Activated B cell treated with CpG ODN at 0.5 μM for 24 hours (primary cell): ENCODE measurements at regions of chr19 and their contacts with region 1.

Region 1: DNA sequence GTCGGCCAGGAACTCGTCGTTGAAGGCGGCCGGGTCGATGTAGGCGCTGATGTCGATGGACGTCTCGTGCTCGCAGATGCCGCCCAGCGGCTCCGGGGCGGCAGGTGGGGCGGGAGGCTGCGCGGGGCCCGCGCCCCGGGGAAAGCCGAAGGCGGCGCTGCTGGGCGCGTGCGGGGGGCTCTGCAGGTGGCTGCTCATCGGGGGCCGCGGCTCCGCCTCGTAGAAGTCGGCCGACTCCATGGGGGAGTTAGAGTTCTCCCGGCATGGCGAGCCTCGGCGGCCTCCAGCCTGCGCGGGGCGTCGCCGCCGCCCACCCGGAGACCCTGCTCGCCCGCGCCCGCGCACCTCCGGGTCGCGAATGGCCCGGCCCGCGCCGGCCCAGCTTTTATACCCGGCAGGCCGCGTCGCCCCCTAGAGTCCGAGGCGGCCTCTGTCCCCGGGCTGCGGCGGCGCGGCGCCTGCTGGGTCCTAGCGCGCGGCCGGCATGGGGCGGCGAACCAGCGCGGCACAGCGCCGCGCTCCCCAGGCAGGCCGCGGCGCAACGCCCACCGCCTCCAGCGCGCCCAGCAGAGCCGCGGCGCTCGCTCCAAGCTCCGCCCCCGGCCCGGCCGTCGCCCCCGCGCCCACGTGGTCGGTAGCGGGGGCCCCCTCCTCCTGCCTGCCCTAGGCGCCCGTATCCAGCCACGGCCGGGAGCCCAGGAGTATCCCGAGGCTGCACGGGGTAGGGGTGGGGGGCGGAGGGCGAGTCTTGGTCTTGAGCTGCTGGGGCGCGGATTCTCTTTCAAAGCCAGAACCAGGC is at the start of gene CEBPA:
- DNase-seq: peak; percentile 70
- ATAC-seq: peak; percentile 93
- H3K4me3 Mint-ChIP-seq: peak within 1 kb of the TSS; percentile 77
- H3K27ac Mint-ChIP-seq: no peak within 1 kb of the TSS
- H3K4me1 Mint-ChIP-seq: peaks cover 7% of the 10 kb centered on the region
- H3K27me3 Mint-ChIP-seq: peaks cover 32% of the 10 kb centered on the region
- CTCF ChIP-seq: no peak
- total RNA-seq, gene CEBPA: 0.51 and 0.83 TPM in 2 replicates

Region 2: DNA sequence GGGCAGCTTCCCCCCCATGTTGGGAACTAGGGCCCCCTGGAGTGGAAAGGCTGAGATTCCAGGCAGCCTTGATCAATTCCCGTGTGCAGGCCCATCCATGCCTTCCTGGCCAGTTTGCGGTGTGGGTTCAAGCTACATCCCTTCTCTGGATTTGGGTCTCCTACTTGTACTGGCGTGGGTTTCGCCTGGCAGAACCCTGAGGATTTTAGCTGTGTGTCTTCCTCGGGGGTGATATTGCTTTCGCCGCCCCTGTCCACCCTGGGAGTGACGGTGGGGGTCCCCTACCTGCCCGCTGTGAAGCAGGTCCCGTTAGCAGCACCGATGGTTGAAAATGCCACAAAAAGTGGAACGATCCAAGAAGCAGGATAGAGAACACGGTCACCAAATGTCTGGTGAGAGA is 444.2 kb before region 1 on chr19:
- CTCF ChIA-PET with region 1: no interaction called
- POLR2A ChIA-PET with region 1: no interaction called
- intact Hi-C with region 1: no loop called
- DNase-seq: no peak
- ATAC-seq: no peak
- H3K4me3 Mint-ChIP-seq: no peak overlapping the region
- H3K27ac Mint-ChIP-seq: no peak overlapping the region
- H3K4me1 Mint-ChIP-seq: no peaks in the 10 kb centered on the region
- H3K27me3 Mint-ChIP-seq: no peaks in the 10 kb centered on the region
- CTCF ChIP-seq: no peak

Region 3: GRCh38 chr19:33080761-33081681 is 221.4 kb before region 1 on chr19 and contains the start of gene GPATCH1:
- CTCF ChIA-PET with region 1: no interaction called
- POLR2A ChIA-PET with region 1: no interaction called
- intact Hi-C with region 1: loop called (anchors 2 kb)
- DNase-seq: peak; percentile 83
- ATAC-seq: peak; percentile 98
- H3K4me3 Mint-ChIP-seq: peak within 1 kb of the TSS; percentile 99
- H3K27ac Mint-ChIP-seq: peak within 1 kb of the TSS; percentile 93
- H3K4me1 Mint-ChIP-seq: peaks cover 23% of the 10 kb centered on the region
- H3K27me3 Mint-ChIP-seq: no peaks in the 10 kb centered on the region
- CTCF ChIP-seq: no peak
- total RNA-seq, gene GPATCH1: 12.8 and 13.0 TPM in 2 replicates

Region 4: DNA sequence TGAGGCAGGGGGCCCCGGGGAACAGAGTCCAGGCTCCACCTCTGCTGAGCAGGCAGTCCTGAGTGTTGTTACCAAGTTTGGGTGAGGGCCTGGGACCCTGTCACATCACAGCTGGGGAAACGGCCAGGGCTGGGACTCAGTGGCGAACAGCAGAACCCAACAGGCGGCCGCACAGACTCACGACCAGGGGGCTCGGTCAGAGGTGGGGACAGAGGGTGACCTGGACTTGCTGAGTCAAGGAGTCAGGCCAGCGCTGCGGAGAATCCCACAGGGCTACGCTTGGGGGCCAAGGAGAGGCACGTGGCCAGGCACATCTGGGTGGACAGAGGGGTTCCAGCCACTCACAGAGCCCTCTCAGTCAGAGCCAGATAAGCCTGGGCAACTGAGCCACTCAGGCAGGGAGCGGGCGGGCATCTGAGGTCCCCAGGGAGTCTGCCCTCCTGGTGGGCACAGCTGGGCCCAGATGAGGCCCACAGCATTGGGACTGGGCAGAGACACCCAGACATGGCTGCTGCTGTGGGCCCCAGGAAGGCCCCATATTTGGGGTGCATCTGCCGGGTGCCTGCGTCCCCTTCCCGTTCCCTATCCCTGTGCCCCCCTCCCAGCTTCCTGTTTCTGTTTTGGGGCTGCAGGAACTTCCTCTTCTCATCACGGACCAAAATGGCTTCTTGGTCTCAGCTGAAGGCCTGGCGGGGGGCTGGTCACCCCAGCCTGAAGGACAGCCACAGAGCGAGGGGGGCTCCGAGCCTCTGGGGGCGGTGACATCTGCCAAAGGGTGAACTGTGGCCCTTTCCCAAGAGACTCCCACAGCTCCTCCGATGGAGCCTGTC is 34.0 kb before region 1 on chr19:
- CTCF ChIA-PET with region 1: no interaction called
- POLR2A ChIA-PET with region 1: no interaction called
- intact Hi-C with region 1: no loop called
- DNase-seq: no peak
- ATAC-seq: no peak
- H3K4me3 Mint-ChIP-seq: no peak overlapping the region
- H3K27ac Mint-ChIP-seq: no peak overlapping the region
- H3K4me1 Mint-ChIP-seq: no peaks in the 10 kb centered on the region
- H3K27me3 Mint-ChIP-seq: peaks cover 8% of the 10 kb centered on the region
- CTCF ChIP-seq: no peak

Region 5: GRCh38 chr19:33373701-33374421 is 71.5 kb after region 1 on chr19 and contains the start of gene CEBPG:
- CTCF ChIA-PET with region 1: no interaction called
- POLR2A ChIA-PET with region 1: interaction called, 12 read pairs
- intact Hi-C with region 1: loop called (anchors 1 kb)
- DNase-seq: no peak
- ATAC-seq: peak; percentile 34
- H3K4me3 Mint-ChIP-seq: peak within 1 kb of the TSS; percentile 86
- H3K27ac Mint-ChIP-seq: peak within 1 kb of the TSS; percentile 93
- H3K4me1 Mint-ChIP-seq: peaks cover 52% of the 10 kb centered on the region
- H3K27me3 Mint-ChIP-seq: no peaks in the 10 kb centered on the region
- CTCF ChIP-seq: no peak
- total RNA-seq, gene CEBPG: 30.6 and 32.0 TPM in 2 replicates

Region 6: DNA sequence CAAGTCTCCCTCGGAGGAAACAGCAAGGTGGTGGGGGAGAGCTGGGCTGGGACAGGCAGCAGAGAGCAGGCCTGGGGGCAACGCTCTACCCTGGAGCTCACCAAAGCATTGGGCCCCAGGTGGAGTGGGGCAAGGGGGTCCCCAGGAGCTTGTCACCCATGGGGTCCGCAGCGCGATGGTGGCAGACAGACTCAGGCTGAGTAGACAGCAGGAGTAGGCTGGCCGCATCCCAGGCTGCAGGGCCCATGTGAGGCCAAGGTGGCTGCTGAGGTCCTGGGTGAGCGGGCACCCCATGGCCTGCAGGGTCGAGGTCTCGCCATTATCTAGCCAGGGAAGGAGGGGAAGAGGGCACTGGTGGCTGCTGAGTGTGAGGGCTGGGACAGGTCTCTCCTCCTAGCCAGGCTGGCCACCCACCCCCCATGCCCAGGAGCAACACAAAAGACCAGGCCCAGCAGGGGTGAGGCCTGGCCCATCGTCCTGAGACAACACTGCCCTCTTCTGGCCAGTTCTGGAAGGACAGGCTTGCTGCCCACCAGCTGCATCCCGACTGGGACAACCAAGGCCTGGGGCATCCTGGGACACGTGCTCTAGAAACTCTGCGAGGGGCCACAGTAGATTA is 104.3 kb after region 1 on chr19:
- CTCF ChIA-PET with region 1: no interaction called
- POLR2A ChIA-PET with region 1: no interaction called
- intact Hi-C with region 1: loop called (anchors 10 kb)
- DNase-seq: peak; percentile 75
- ATAC-seq: peak; percentile 85
- H3K4me3 Mint-ChIP-seq: no peak overlapping the region
- H3K27ac Mint-ChIP-seq: no peak overlapping the region
- H3K4me1 Mint-ChIP-seq: no peaks in the 10 kb centered on the region
- H3K27me3 Mint-ChIP-seq: no peaks in the 10 kb centered on the region
- CTCF ChIP-seq: no peak